Vagina (tissue), 2 donors: ENCODE measurements at regions of chr15 and their contacts with region 1.

Region 1: DNA sequence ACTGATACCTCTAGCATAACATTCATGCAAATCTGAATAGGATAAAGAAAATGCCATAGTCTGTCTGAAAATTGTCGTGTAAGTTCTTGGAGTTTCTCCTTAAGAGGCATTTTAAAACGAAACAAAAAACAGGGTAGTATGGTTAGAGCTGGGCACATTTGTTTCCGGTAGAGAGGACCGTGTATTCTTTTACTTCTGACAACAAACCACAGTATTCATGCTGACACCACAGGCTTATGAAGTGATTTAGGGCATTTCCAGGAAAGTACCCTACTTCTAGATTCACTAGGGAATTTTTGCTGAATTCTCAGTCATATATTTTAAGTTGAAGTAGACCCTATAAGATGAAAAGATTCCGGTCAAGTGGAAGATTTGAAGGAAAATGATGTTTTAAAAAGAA is 541.3 kb downstream of the UNC13C start:
- DNase-seq: no peak
- H3K4me3 ChIP-seq: no peak overlapping the region
- H3K27ac ChIP-seq: no peak overlapping the region
- H3K4me1 ChIP-seq: no peaks in the 10 kb centered on the region
- H3K27me3 ChIP-seq: no peaks in the 10 kb centered on the region
- CTCF ChIP-seq: no peak
- POLR2A ChIP-seq: no peak

Region 2: GRCh38 chr15:53955396-53955795 is 564.2 kb before region 1 on chr15:
- intact Hi-C with region 1: no loop called
- DNase-seq: no peak
- H3K4me3 ChIP-seq: no peak overlapping the region
- H3K27ac ChIP-seq: no peak overlapping the region
- H3K4me1 ChIP-seq: no peaks in the 10 kb centered on the region
- H3K27me3 ChIP-seq: no peaks in the 10 kb centered on the region
- CTCF ChIP-seq: no peak
- POLR2A ChIP-seq: no peak

Region 3: GRCh38 chr15:56076640-56077039 is 1557.1 kb after region 1 on chr15:
- intact Hi-C with region 1: loop called (anchors 10 kb)
- DNase-seq: no peak
- H3K4me3 ChIP-seq: no peak overlapping the region
- H3K27ac ChIP-seq: no peak overlapping the region
- H3K4me1 ChIP-seq: no peaks in the 10 kb centered on the region
- H3K27me3 ChIP-seq: no peaks in the 10 kb centered on the region
- CTCF ChIP-seq: no peak
- POLR2A ChIP-seq: no peak